Body of pancreas (tissue), 4 donors: ENCODE measurements at regions of chr10 and their contacts with region 1.

Region 1: GRCh38 chr10:100518761-100519241 is 860 bp downstream of the SEC31B start:
- DNase-seq: peak; percentile 74 to 88 (median 82)
- ATAC-seq: peak; percentile 88
- H3K4me3 ChIP-seq: no peak overlapping the region
- H3K27ac ChIP-seq: no peak overlapping the region
- H3K4me1 ChIP-seq: peaks cover 13% of the 10 kb centered on the region
- H3K27me3 ChIP-seq: no peaks in the 10 kb centered on the region
- CTCF ChIP-seq: peak; percentile 52 to 90 (median 73)
- POLR2A ChIP-seq: no peak

Region 2: DNA sequence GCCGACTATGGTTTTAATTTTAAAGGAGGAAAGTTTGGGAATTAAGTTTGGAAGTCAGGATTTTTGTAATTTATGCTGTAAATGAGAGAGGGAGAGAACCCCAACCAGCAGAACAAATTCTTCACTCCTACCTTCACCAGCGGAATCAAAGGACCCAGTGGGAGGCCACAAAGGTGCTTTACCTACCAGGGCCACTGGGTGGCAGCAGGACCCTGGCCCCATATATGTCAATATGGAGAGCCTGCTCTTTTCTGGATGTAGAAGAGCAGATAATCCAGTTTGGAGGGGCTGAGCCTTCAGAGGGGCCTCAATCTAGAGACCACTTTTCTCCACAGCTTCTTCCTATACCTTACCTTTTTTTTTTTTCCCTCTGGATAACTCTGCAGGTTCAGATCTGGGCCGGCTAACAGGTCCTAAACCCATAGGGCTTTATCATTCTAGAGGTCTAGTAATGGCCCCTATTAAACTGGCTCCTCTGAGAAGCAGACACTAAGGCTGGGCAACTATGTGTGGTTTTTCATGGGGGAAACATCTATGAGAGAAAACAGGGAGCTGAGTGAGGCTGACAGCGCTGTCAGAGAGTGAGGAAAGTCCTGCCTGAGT is 180.3 kb before region 1 on chr10:
- intact Hi-C with region 1: loop called (anchors 10 kb)
- DNase-seq: peak; percentile 79 to 87 (median 82)
- ATAC-seq: peak; percentile 79
- H3K4me3 ChIP-seq: no peak overlapping the region
- H3K27ac ChIP-seq: no peak overlapping the region
- H3K4me1 ChIP-seq: no peaks in the 10 kb centered on the region
- H3K27me3 ChIP-seq: no peaks in the 10 kb centered on the region
- CTCF ChIP-seq: peak; percentile 84 to 96 (median 89)
- POLR2A ChIP-seq: no peak

Region 3: DNA sequence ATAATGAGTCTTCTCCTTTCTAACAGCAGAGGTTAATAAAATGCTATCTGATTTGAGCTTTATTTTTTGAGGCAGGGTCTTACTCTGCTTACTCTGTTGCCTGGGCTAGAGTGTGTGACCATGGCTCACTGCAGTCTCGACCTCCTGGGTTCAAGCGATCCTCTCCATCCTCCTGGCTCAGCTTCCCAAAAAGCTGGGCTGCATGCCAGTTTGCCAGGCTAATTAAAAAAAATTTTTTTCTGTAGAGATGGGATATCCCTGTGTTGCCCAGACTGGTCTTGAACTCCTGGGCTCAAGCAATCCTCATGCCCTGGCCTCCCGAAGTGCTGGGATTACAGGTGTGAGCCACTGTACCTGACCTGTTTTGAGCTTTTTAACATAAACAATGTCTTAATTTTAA is 115.1 kb before region 1 on chr10:
- intact Hi-C with region 1: no loop called
- DNase-seq: no peak
- ATAC-seq: no peak
- H3K4me3 ChIP-seq: no peak overlapping the region
- H3K27ac ChIP-seq: no peak overlapping the region
- H3K4me1 ChIP-seq: no peaks in the 10 kb centered on the region
- H3K27me3 ChIP-seq: no peaks in the 10 kb centered on the region
- CTCF ChIP-seq: no peak
- POLR2A ChIP-seq: no peak